BJ (cell line): ENCODE measurements at regions of chr4 and their contacts with region 1.

Region 1: GRCh38 chr4:109592367-109592766 is 32.3 kb downstream of the MCUB start:
- DNase-seq: no peak
- H3K4me3 ChIP-seq: no peak overlapping the region
- H3K27me3 ChIP-seq: no peaks in the 10 kb centered on the region
- CTCF ChIP-seq: no peak

Region 2: GRCh38 chr4:109559983-109560686 is 32.2 kb before region 1 on chr4 and contains the start of gene MCUB:
- CTCF ChIA-PET with region 1: no interaction called
- POLR2A ChIA-PET with region 1: interaction called, 13 read pairs
- DNase-seq: peak; percentile 51
- H3K4me3 ChIP-seq: peak within 1 kb of the TSS; percentile 82
- H3K27me3 ChIP-seq: no peaks in the 10 kb centered on the region
- CTCF ChIP-seq: no peak
- polyA plus RNA-seq, gene MCUB: 23.3 and 25.4 TPM in 2 replicates

Region 3: DNA sequence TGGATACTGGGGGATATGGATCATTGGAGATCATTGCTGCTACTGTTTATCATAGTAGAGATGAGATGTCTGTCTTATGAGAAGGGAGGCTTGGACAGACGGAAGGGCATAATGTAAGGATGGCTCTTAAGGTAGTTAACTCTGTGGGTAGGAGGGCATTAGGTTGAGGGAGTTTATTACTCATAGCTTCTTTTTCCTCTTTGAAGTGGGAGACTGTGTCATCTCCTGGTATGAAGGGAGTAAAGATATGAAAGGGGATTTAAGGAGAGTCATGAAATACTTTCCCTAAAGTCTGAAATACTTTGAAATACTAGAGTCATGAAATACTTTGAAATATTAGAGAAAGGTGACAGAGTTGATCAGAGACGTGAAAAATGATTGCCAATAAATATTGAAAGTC is 1286.0 kb after region 1 on chr4:
- CTCF ChIA-PET with region 1: no interaction called
- POLR2A ChIA-PET with region 1: no interaction called
- DNase-seq: no peak
- H3K4me3 ChIP-seq: no peak overlapping the region
- H3K27me3 ChIP-seq: peaks cover 2% of the 10 kb centered on the region
- CTCF ChIP-seq: no peak